HAP-1 (cell line): ENCODE measurements at regions of chr9 and their contacts with region 1.

Region 1: GRCh38 chr9:19028835-19029451 is 4.1 kb downstream of the SAXO1 start:
- DNase-seq: peak; percentile 68 to 74
- H3K4me3 ChIP-seq: no peak overlapping the region
- H3K4me1 ChIP-seq: no peaks in the 10 kb centered on the region
- H3K27me3 ChIP-seq: no peaks in the 10 kb centered on the region; the same call in 1 of the 2 replicates

Region 2: DNA sequence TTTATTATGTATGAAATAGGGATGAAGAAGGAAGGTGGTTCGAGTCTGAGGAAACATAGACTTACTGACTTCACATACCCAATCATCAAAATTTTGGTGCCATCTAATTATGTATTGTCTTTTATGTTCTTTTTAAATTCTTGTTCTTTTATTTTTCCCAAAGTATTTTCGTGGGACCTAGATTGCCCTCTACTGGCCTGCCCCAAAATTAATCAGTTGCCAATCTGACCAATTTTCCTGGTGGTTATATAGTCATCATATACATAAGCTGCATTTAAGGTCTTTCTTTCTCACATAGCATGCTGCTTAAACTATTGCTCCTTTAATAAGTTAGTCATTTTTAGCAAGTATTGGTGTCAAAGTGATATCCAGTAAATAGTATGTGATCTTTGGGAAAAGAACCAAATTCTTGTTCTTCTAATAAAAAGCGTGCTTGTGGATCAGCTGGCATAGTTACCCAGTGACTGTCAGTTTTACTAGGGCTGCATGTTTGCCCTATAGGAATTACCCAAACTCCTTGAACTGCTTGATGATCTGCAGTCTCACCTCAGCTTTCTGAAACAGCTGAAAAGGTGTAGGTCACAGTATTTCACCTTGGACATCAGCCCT is 1226.6 kb before region 1 on chr9:
- in situ Hi-C with region 1: loop called (anchors 10 kb)
- DNase-seq: peak; percentile 8 to 19
- H3K4me3 ChIP-seq: no peak overlapping the region
- H3K4me1 ChIP-seq: no peaks in the 10 kb centered on the region
- H3K27me3 ChIP-seq: no peaks in the 10 kb centered on the region; the same call in 1 of the 2 replicates

Region 3: GRCh38 chr9:18250053-18250452 is 778.9 kb before region 1 on chr9:
- in situ Hi-C with region 1: loop called (anchors 5 kb)
- DNase-seq: no peak
- H3K4me3 ChIP-seq: no peak overlapping the region
- H3K4me1 ChIP-seq: no peaks in the 10 kb centered on the region
- H3K27me3 ChIP-seq: no peaks in the 10 kb centered on the region; the same call in 1 of the 2 replicates

Region 4: GRCh38 chr9:19533373-19533772 is 504.4 kb after region 1 on chr9:
- in situ Hi-C with region 1: no loop called
- DNase-seq: no peak
- H3K4me3 ChIP-seq: no peak overlapping the region
- H3K4me1 ChIP-seq: no peaks in the 10 kb centered on the region
- H3K27me3 ChIP-seq: no peaks in the 10 kb centered on the region